H1 (cell line): ENCODE measurements at regions of chr12 and their contacts with region 1.

Region 1: DNA sequence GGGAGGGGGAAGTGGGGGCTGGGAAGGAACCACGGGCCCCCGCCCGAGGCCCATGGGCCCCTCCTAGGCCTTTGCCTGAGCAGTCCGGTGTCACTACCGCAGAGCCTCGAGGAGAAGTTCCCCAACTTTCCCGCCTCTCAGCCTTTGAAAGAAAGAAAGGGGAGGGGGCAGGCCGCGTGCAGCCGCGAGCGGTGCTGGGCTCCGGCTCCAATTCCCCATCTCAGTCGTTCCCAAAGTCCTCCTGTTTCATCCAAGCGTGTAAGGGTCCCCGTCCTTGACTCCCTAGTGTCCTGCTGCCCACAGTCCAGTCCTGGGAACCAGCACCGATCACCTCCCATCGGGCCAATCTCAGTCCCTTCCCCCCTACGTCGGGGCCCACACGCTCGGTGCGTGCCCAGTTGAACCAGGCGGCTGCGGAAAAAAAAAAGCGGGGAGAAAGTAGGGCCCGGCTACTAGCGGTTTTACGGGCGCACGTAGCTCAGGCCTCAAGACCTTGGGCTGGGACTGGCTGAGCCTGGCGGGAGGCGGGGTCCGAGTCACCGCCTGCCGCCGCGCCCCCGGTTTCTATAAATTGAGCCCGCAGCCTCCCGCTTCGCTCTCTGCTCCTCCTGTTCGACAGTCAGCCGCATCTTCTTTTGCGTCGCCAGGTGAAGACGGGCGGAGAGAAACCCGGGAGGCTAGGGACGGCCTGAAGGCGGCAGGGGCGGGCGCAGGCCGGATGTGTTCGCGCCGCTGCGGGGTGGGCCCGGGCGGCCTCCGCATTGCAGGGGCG is at the start of gene GAPDH:
- DNase-seq: peak; percentile 87 to 91
- H3K4me3 ChIP-seq: peak within 1 kb of the TSS; percentile 83 to 98 (median 90)
- H3K27ac ChIP-seq: peak within 1 kb of the TSS; percentile 98
- H3K4me1 ChIP-seq: peaks cover 0 to 19% (median 16%) of the 10 kb centered on the region in 4 experiments; a peak in 6 of 7 replicates
- H3K27me3 ChIP-seq: no peaks in the 10 kb centered on the region
- CTCF ChIP-seq: no peak; a peak in 1 of 4 replicates
- EP300 ChIP-seq: peak in 1 of 2 experiments; percentile 7; a peak in 1 of 3 replicates
- POLR2A ChIP-seq: peak in 1 of 2 experiments; percentile 85; a peak in 1 of 3 replicates
- RAD21 ChIP-seq: no peak
- total RNA-seq, gene GAPDH: 5,175 and 5,215 TPM in 2 replicates

Region 2: GRCh38 chr12:6323340-6323994 is 210.6 kb before region 1 on chr12:
- CTCF ChIA-PET with region 1: interaction called, 4 read pairs
- POLR2A ChIA-PET with region 1: interaction called, 16 read pairs
- DNase-seq: peak in 1 of 2 experiments; percentile 72
- H3K4me3 ChIP-seq: peak overlapping the region in 2 of 4 experiments; percentile 6 to 48; a peak in 3 of 8 replicates
- H3K27ac ChIP-seq: peak overlapping the region; percentile 89
- H3K4me1 ChIP-seq: peaks cover 13 to 41% (median 29%) of the 10 kb centered on the region in 4 experiments
- H3K27me3 ChIP-seq: no peaks in the 10 kb centered on the region
- CTCF ChIP-seq: peak in 2 of 3 experiments; percentile 19 to 40; a peak in 3 of 4 replicates
- EP300 ChIP-seq: 0 out of 3 replicates have a peak, but pooled peaks of 1 of the 2 experiments have one; percentile 45
- POLR2A ChIP-seq: peak in 1 of 2 experiments; percentile 38; a peak in 1 of 3 replicates
- RAD21 ChIP-seq: peak in 1 of 2 experiments; percentile 37; a peak in 2 of 4 replicates

Region 3: GRCh38 chr12:6451348-6452244 is 82.5 kb before region 1 on chr12 and contains the start of gene TAPBPL:
- CTCF ChIA-PET with region 1: no interaction called
- POLR2A ChIA-PET with region 1: interaction called, 22 read pairs
- DNase-seq: peak in 1 of 2 experiments; percentile 73
- H3K4me3 ChIP-seq: peak within 1 kb of the TSS in 3 of 4 experiments; percentile 7 to 42 (median 27); a peak in 4 of 8 replicates
- H3K27ac ChIP-seq: peak within 1 kb of the TSS; percentile 78
- H3K4me1 ChIP-seq: peaks cover 23 to 36% (median 31%) of the 10 kb centered on the region in 4 experiments
- H3K27me3 ChIP-seq: no peaks in the 10 kb centered on the region
- CTCF ChIP-seq: no peak
- EP300 ChIP-seq: no peak
- POLR2A ChIP-seq: no peak
- RAD21 ChIP-seq: no peak
- total RNA-seq, gene TAPBPL: 0.61 and 0.67 TPM in 2 replicates

Region 4: DNA sequence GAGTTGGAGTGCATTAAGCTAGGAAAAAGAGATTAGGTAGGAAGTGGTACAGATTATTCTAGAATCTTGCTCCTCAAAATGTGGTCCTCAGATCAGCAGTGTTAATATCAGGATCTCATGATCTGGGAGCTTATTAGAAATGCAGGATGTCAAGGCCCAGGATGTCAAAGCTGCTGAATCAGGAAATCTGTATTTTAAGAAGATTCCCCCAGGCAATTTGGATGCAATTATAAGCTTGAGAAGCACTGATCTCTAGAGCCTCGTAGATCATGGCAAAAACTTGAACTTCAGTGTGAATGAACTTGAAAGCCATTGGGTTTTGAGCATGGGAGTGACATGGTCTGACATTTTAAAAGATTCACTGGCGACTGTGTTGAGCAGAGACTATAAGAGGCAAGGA is 33.6 kb before region 1 on chr12:
- CTCF ChIA-PET with region 1: interaction called, 10 read pairs
- POLR2A ChIA-PET with region 1: interaction called, 37 read pairs
- DNase-seq: no peak
- H3K4me3 ChIP-seq: no peak overlapping the region
- H3K27ac ChIP-seq: no peak overlapping the region
- H3K4me1 ChIP-seq: no peaks in the 10 kb centered on the region; a peak in 1 of 7 replicates
- H3K27me3 ChIP-seq: no peaks in the 10 kb centered on the region
- CTCF ChIP-seq: no peak
- EP300 ChIP-seq: no peak
- POLR2A ChIP-seq: no peak
- RAD21 ChIP-seq: no peak

Region 5: DNA sequence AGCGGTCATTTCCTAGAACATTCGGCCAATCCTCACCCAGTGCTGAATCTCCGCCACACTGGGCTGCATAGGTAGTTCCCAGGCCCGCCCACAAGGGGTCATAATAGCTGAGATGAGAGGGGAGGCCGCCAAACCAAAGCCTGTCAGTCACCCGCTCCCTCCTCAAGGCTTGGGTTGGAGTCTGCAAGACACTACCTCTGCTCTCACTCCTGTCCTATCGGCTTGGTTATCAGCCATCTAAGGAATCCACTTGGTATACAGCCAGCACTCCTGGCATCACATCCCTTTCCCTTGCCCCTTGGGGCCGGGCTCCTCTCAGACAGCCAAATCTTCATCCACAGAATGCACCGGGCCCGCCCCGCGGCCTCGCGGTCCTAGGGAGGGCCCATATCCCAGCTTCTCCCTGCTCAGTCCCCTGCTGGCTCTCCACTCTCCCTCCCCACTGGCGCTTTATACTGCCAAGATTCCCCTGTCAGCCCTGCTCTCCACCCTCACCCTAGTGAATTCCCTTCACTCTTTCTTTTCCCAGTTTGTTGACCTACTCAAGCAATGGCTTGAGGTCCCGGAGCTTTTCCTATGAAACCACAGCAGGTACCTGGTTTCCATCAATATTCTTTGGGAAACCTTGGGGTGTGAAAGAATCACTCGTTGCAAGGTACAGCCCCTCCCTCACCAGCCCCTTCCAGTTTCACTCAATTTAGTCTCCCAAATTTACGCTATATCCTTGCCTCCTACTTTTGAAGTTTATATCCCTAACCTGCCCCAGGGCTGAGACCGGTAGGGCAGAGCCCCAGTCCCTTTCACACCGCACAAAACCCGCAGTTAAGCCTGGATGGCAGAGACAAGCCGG is 20.3 kb after region 1 on chr12:
- CTCF ChIA-PET with region 1: interaction called, 462 read pairs
- POLR2A ChIA-PET with region 1: interaction called, 665 read pairs
- DNase-seq: peak in 1 of 2 experiments; percentile 93
- H3K4me3 ChIP-seq: peak overlapping the region; percentile 70 to 87 (median 82)
- H3K27ac ChIP-seq: no peak overlapping the region
- H3K4me1 ChIP-seq: peaks cover 4 to 15% (median 9%) of the 10 kb centered on the region in 4 experiments
- H3K27me3 ChIP-seq: no peaks in the 10 kb centered on the region
- CTCF ChIP-seq: peak in 2 of 3 experiments; percentile 68 to 90; a peak in 3 of 4 replicates
- EP300 ChIP-seq: no peak
- POLR2A ChIP-seq: no peak
- RAD21 ChIP-seq: peak; percentile 31 to 47

Region 6: DNA sequence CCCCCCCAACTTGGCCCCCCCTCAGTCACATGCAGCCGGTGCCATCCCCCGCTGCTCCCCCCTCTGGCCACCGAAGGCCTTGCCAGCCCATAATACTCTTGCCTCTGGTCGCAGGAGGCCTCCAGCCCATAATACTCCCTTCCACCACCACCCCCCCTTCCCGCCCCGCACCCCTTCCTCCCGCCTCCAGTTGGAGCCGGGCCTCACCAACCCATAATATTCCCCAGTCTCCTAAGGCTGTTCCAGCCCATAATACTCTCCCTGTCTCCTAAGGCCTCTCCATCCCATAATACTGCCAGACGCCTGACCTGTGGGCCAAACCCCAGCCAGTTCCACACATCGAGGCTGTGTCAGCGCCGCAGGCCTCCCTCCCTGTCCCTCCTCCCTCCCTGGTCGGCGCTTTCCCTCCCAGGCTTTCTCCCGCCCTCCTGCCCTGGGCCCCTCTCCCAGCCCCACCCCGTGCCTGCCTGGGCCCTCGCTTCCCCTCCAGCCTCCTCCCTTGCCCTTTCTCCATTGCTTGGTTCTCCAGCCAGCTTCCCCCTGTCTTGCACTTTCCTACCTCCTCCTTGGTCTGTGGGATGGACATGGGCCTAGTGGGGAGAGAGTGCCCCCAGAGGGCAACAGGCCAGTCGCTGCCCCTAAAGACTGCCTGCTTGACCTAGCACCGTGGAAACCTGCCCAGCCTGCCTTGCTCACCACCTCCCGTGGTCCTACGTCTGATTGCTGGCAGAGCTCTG is 79.8 kb after region 1 on chr12:
- CTCF ChIA-PET with region 1: interaction called, 3 read pairs
- POLR2A ChIA-PET with region 1: interaction called, 19 read pairs
- DNase-seq: peak; percentile 82 to 86
- H3K4me3 ChIP-seq: peak overlapping the region in 2 of 4 experiments; percentile 0 to 32; a peak in 1 of 8 replicates
- H3K27ac ChIP-seq: peak overlapping the region; percentile 44; the same call in 1 of the 2 replicates
- H3K4me1 ChIP-seq: peaks cover 15 to 21% (median 17%) of the 10 kb centered on the region in 4 experiments
- H3K27me3 ChIP-seq: peaks cover 0 to 3% (median 1%) of the 10 kb centered on the region in 4 experiments; a peak in 2 of 7 replicates
- CTCF ChIP-seq: peak; percentile 27 to 63 (median 34); a peak in 3 of 4 replicates
- EP300 ChIP-seq: no peak
- POLR2A ChIP-seq: no peak
- RAD21 ChIP-seq: peak in 1 of 2 experiments; percentile 10; a peak in 1 of 4 replicates

Region 7: GRCh38 chr12:6873094-6874014 is 339.2 kb after region 1 on chr12 and contains the start of gene SPSB2:
- CTCF ChIA-PET with region 1: interaction called, 3 read pairs
- POLR2A ChIA-PET with region 1: interaction called, 11 read pairs
- DNase-seq: peak; percentile 99 to 100
- H3K4me3 ChIP-seq: peak within 1 kb of the TSS; percentile 82 to 95 (median 87)
- H3K27ac ChIP-seq: peak within 1 kb of the TSS; percentile 61
- H3K4me1 ChIP-seq: peaks cover 2 to 33% (median 14%) of the 10 kb centered on the region in 4 experiments
- H3K27me3 ChIP-seq: no peaks in the 10 kb centered on the region
- CTCF ChIP-seq: no peak
- EP300 ChIP-seq: peak in 1 of 2 experiments; percentile 52; a peak in 1 of 3 replicates
- POLR2A ChIP-seq: no peak
- RAD21 ChIP-seq: peak in 1 of 2 experiments; percentile 9; a peak in 1 of 4 replicates
- total RNA-seq, gene SPSB2: 13.0 and 13.9 TPM in 2 replicates